CD4-positive, alpha-beta T cell (primary cell): ENCODE measurements at regions of chr9 and their contacts with region 1.

Region 1: GRCh38 chr9:130128733-130129431 is 43.3 kb upstream of the NCS1 start:
- DNase-seq: peak; percentile 17 to 86 (median 44)
- ATAC-seq: peak; percentile 60
- H3K4me3 ChIP-seq: peak overlapping the region; percentile 24
- H3K4me3 Mint-ChIP-seq: peak overlapping the region; percentile 71
- H3K27ac ChIP-seq: peak overlapping the region; percentile 83 to 95
- H3K27ac Mint-ChIP-seq: peak overlapping the region; percentile 98
- H3K4me1 ChIP-seq: peaks cover 60% of the 10 kb centered on the region
- H3K4me1 Mint-ChIP-seq: peaks cover 57% of the 10 kb centered on the region
- H3K27me3 ChIP-seq: no peaks in the 10 kb centered on the region
- H3K27me3 Mint-ChIP-seq: no peaks in the 10 kb centered on the region
- CTCF ChIP-seq: no peak

Region 2: DNA sequence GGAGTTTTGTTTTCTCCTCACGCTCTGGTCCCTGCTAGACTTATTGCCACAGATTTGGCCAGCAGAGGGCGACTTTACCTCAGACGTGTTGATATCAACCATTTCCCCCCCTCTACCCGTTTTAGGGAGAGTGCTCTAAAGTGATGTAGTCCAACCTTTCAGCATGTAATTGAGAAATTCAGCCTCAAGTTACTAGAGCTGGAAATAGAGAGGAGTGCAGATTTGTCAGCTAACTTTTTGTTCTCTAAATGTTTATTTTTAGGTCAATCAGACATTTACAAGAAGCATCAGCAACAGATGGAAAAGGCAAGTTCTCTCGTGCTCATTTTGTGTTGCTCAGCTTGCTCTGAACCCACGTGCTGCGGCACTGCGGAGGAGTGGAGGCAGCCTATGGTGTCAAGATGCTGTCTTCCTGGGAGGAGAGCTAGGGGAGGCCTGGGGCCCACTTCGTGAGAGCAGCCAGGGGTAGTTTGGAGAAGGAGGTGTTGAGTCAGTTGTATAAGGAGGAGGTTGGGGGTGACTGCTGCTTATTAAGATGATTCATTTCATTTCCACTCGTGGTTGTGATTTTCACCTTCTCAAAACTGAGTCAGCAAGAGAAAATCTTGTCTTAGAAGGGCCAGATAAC is 21.5 kb before region 1 on chr9:
- CTCF ChIA-PET with region 1: interaction called, 13 read pairs
- POLR2A ChIA-PET with region 1: interaction called, 6 read pairs
- intact Hi-C with region 1: loop called (anchors 1 to 2 kb)
- DNase-seq: peak; percentile 71 to 92 (median 84)
- ATAC-seq: peak; percentile 90
- H3K4me3 ChIP-seq: no peak overlapping the region
- H3K4me3 Mint-ChIP-seq: no peak overlapping the region
- H3K27ac ChIP-seq: no peak overlapping the region
- H3K27ac Mint-ChIP-seq: peak overlapping the region; percentile 7
- H3K4me1 ChIP-seq: peaks cover 10% of the 10 kb centered on the region
- H3K4me1 Mint-ChIP-seq: peaks cover 19% of the 10 kb centered on the region
- H3K27me3 ChIP-seq: no peaks in the 10 kb centered on the region
- H3K27me3 Mint-ChIP-seq: no peaks in the 10 kb centered on the region
- CTCF ChIP-seq: peak; percentile 89

Region 3: DNA sequence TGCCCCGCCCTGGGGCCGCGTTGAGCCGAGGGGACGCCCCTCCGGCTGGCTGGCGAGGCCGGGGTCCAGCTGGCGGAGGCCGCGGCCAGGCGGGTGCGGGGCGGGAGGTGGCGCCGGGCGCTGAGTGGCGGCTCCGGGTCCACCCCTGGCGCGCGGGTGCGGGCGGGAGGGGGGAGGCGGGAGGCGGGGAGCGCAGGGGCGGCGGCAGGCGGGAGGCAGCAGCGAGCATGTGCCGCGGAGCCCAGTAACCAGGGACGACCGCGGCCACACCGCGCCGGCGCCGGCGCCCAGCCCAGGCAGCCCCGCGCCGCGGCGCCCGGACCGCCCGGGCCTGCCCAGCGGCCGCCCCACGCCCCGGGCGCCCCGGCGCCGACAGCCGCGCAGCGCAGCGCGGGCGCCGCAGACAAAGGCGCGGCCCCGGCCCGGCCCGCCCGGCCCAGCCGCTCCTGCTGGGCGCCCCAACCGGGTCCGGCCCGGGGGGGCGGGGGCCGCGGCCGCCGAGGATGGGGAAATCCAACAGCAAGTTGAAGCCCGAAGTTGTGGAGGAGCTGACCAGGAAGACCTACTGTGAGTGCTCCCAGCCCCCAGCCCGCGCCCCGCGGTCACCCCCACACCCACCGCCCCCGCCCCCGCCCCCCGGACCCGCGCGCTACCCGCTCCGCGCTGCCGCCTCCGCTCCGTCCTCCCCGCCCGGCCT is 43.4 kb after region 1 on chr9 and contains the start of gene NCS1:
- CTCF ChIA-PET with region 1: interaction called, 3 read pairs
- POLR2A ChIA-PET with region 1: interaction called, 7 read pairs
- intact Hi-C with region 1: loop called (anchors 2 to 5 kb)
- DNase-seq: peak in 11 of 14 experiments; percentile 11 to 61 (median 38)
- ATAC-seq: peak; percentile 69
- H3K4me3 ChIP-seq: peak within 1 kb of the TSS; percentile 12
- H3K4me3 Mint-ChIP-seq: peak within 1 kb of the TSS; percentile 76
- H3K27ac ChIP-seq: no peak within 1 kb of the TSS
- H3K27ac Mint-ChIP-seq: no peak within 1 kb of the TSS
- H3K4me1 ChIP-seq: peaks cover 14% of the 10 kb centered on the region
- H3K4me1 Mint-ChIP-seq: peaks cover 10% of the 10 kb centered on the region
- H3K27me3 ChIP-seq: peaks cover 18 to 28% of the 10 kb centered on the region in 2 experiments
- H3K27me3 Mint-ChIP-seq: peaks cover 23% of the 10 kb centered on the region
- CTCF ChIP-seq: no peak
- total RNA-seq, gene NCS1: 0.17 TPM in 1 of 2 experiments, not detected in the other

Region 4: GRCh38 chr9:130235897-130236668 is 107.2 kb after region 1 on chr9:
- CTCF ChIA-PET with region 1: interaction called, 8 read pairs
- POLR2A ChIA-PET with region 1: interaction called, 3 read pairs
- intact Hi-C with region 1: loop called in 1 of 2 experiments (anchors 5 kb)
- DNase-seq: peak; percentile 52 to 82 (median 64)
- ATAC-seq: peak; percentile 40
- H3K4me3 ChIP-seq: no peak overlapping the region
- H3K4me3 Mint-ChIP-seq: peak overlapping the region; percentile 34
- H3K27ac ChIP-seq: no peak overlapping the region
- H3K27ac Mint-ChIP-seq: no peak overlapping the region
- H3K4me1 ChIP-seq: peaks cover 30% of the 10 kb centered on the region
- H3K4me1 Mint-ChIP-seq: peaks cover 22% of the 10 kb centered on the region
- H3K27me3 ChIP-seq: no peaks in the 10 kb centered on the region
- H3K27me3 Mint-ChIP-seq: no peaks in the 10 kb centered on the region
- CTCF ChIP-seq: peak; percentile 98

Region 5: GRCh38 chr9:130973169-130973936 is 844.5 kb after region 1 on chr9:
- CTCF ChIA-PET with region 1: no interaction called
- POLR2A ChIA-PET with region 1: no interaction called
- intact Hi-C with region 1: no loop called
- DNase-seq: no peak
- ATAC-seq: no peak
- H3K4me3 ChIP-seq: no peak overlapping the region
- H3K4me3 Mint-ChIP-seq: no peak overlapping the region
- H3K27ac ChIP-seq: no peak overlapping the region
- H3K27ac Mint-ChIP-seq: no peak overlapping the region
- H3K4me1 ChIP-seq: no peaks in the 10 kb centered on the region
- H3K4me1 Mint-ChIP-seq: no peaks in the 10 kb centered on the region
- H3K27me3 ChIP-seq: peaks cover 0 to 2% of the 10 kb centered on the region in 2 experiments
- H3K27me3 Mint-ChIP-seq: peaks cover 26% of the 10 kb centered on the region
- CTCF ChIP-seq: no peak